Ovary (tissue), 10 donors: ENCODE measurements at regions of chr20 and their contacts with region 1.

Region 1: GRCh38 chr20:8722276-8722928 is 346.5 kb upstream of the PLCB4 start:
- DNase-seq: peak in 2 of 5 donors; percentile 18 to 30
- H3K4me3 ChIP-seq: no peak overlapping the region
- H3K27ac ChIP-seq: no peak overlapping the region
- H3K4me1 ChIP-seq: no peaks in the 10 kb centered on the region
- H3K27me3 ChIP-seq: no peaks in the 10 kb centered on the region
- CTCF ChIP-seq: peak; percentile 57 to 78 (median 64)
- EP300 ChIP-seq: no peak
- POLR2A ChIP-seq: no peak

Region 2: DNA sequence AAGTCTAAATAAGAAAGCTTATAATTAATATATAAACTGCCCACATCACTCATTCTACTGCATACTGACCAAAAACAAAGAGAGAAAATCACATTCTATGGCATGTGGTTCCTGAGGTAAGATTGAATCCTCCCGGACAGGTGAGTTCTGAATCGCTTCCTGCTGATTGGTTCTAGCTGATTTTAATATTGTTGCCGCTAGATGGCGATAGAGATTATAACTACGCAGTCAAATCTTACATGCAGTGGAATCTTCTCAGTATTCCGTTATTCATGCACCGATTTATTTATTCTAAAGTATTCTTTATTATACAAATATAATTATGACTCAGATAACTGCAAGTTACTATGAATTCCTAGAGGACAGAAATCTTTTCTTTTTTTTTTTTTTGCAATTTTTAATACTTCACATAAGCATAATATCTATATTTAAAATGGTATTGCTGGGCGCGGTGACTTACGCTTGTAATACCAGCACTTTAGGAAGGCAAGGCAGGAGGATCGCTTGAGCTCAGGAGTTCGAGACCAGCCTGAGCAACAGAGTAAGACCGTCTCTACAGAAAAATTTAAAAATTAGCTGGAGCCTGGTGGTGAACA is 678.6 kb before region 1 on chr20:
- intact Hi-C with region 1: loop called (anchors 5 to 10 kb)
- DNase-seq: no peak
- H3K4me3 ChIP-seq: no peak overlapping the region
- H3K27ac ChIP-seq: no peak overlapping the region
- H3K4me1 ChIP-seq: no peaks in the 10 kb centered on the region
- H3K27me3 ChIP-seq: no peaks in the 10 kb centered on the region
- CTCF ChIP-seq: peak; percentile 54 to 72 (median 56)
- EP300 ChIP-seq: no peak
- POLR2A ChIP-seq: no peak

Region 3: DNA sequence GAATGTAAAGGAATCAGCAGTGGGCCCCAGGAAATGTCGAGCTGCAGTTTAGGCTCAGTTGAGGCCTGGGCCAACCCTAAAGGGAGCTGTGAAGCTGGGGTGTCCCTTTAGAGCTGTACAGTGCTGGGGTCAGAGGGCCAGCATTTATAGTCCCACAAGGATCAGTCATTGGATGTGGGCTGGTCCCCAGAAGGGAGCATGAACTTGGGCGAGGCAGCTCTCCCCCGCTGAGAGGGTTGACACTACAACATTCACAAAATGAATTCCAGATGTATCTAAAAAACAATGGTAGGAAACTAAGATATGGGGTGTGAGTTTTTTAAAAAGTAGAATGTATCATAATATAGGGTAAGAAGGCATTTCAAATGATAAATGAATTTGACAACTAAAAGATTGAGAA is 673.1 kb before region 1 on chr20:
- intact Hi-C with region 1: loop called (anchors 5 to 10 kb)
- DNase-seq: no peak
- H3K4me3 ChIP-seq: no peak overlapping the region
- H3K27ac ChIP-seq: no peak overlapping the region
- H3K4me1 ChIP-seq: no peaks in the 10 kb centered on the region
- H3K27me3 ChIP-seq: no peaks in the 10 kb centered on the region
- CTCF ChIP-seq: no peak
- EP300 ChIP-seq: no peak
- POLR2A ChIP-seq: no peak

Region 4: GRCh38 chr20:8131598-8132483 is 590.6 kb before region 1 on chr20 and contains the start of gene PLCB1:
- intact Hi-C with region 1: loop called in 1 of 4 experiments (anchors 2 kb)
- DNase-seq: peak; percentile 75 to 88 (median 84)
- H3K4me3 ChIP-seq: peak within 1 kb of the TSS; percentile 55
- H3K27ac ChIP-seq: peak within 1 kb of the TSS in 1 of 2 donors; percentile 51
- H3K4me1 ChIP-seq: peaks cover 5% of the 10 kb centered on the region
- H3K27me3 ChIP-seq: no peaks in the 10 kb centered on the region
- CTCF ChIP-seq: peak; percentile 18 to 82 (median 73)
- EP300 ChIP-seq: no peak
- POLR2A ChIP-seq: no peak
- total RNA-seq, gene PLCB1: 3.6 to 29.5 (median 10.0) TPM

Region 5: GRCh38 chr20:8670893-8671215 is 51.5 kb before region 1 on chr20:
- intact Hi-C with region 1: no loop called
- DNase-seq: no peak
- H3K4me3 ChIP-seq: no peak overlapping the region
- H3K27ac ChIP-seq: no peak overlapping the region
- H3K4me1 ChIP-seq: no peaks in the 10 kb centered on the region
- H3K27me3 ChIP-seq: no peaks in the 10 kb centered on the region
- CTCF ChIP-seq: no peak
- EP300 ChIP-seq: no peak
- POLR2A ChIP-seq: no peak